ENCODE measurements at regions of chr9 and their contacts with region 1.

Region 1: DNA sequence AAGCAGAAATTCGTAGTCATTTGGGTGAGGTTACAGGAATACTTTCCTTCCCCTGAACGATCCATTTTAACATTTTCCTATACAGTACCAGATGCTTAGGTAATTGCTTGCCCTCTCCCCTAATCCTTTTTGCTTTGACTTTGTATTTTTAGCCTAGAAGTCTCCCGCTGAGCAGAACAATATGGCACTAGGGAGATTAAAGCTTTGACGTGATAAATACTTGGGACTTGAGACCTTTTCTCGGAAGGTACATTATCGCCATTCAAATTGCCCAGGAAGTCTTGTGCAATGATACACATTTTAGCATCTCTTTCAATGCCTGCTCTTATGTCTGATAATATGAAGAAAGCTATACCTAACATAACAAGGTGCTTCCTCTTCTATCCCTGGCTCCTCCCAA is 22.9 kb upstream of the SPATA31C2 start:
- DNase-seq: no peak
- H3K4me3 Mint-ChIP-seq: no peak overlapping the region
- H3K27ac Mint-ChIP-seq: no peak overlapping the region
- H3K4me1 Mint-ChIP-seq: no peaks in the 10 kb centered on the region
- H3K27me3 Mint-ChIP-seq: peaks cover 12% of the 10 kb centered on the region
- CTCF ChIP-seq: no peak

Region 2: GRCh38 chr9:88173378-88173999 is 12.3 kb after region 1 on chr9:
- CTCF ChIA-PET with region 1: interaction called, 10 read pairs
- POLR2A ChIA-PET with region 1: no interaction called
- intact Hi-C with region 1: no loop called
- DNase-seq: peak; percentile 87
- H3K4me3 Mint-ChIP-seq: no peak overlapping the region
- H3K27ac Mint-ChIP-seq: no peak overlapping the region
- H3K4me1 Mint-ChIP-seq: peaks cover 5% of the 10 kb centered on the region
- H3K27me3 Mint-ChIP-seq: peaks cover 33% of the 10 kb centered on the region
- CTCF ChIP-seq: peak; percentile 85